CD14-positive monocyte (primary cell): ENCODE measurements at regions of chr11 and their contacts with region 1.

Region 1: GRCh38 chr11:62855571-62856332 is 16.4 kb upstream of the WDR74 start:
- DNase-seq: peak; percentile 97 to 99 (median 98)
- H3K4me3 ChIP-seq: peak overlapping the region; percentile 77 to 96 (median 94)
- H3K4me3 Mint-ChIP-seq: peak overlapping the region; percentile 91 to 98
- H3K27ac ChIP-seq: peak overlapping the region; percentile 11 to 81
- H3K27ac Mint-ChIP-seq: peak overlapping the region; percentile 88 to 94 (median 90)
- H3K4me1 ChIP-seq: peaks cover 34 to 45% of the 10 kb centered on the region in 2 donors
- H3K4me1 Mint-ChIP-seq: peaks cover 48% of the 10 kb centered on the region
- H3K27me3 ChIP-seq: no peaks in the 10 kb centered on the region
- H3K27me3 Mint-ChIP-seq: no peaks in the 10 kb centered on the region
- CTCF ChIP-seq: no peak

Region 2: GRCh38 chr11:61860054-61860903 is 995.5 kb before region 1 on chr11:
- intact Hi-C with region 1: no loop called
- DNase-seq: no peak
- H3K4me3 ChIP-seq: no peak overlapping the region
- H3K4me3 Mint-ChIP-seq: no peak overlapping the region
- H3K27ac ChIP-seq: no peak overlapping the region
- H3K27ac Mint-ChIP-seq: peak overlapping the region in 3 of 7 donors; percentile 17 to 66 (median 40)
- H3K4me1 ChIP-seq: no peaks in the 10 kb centered on the region
- H3K4me1 Mint-ChIP-seq: no peaks in the 10 kb centered on the region
- H3K27me3 ChIP-seq: no peaks in the 10 kb centered on the region
- H3K27me3 Mint-ChIP-seq: peaks cover 0 to 2% (median 0%) of the 10 kb centered on the region in 3 donors
- CTCF ChIP-seq: no peak

Region 3: GRCh38 chr11:62612366-62613290 is 243.1 kb before region 1 on chr11 and contains the starts of genes EML3 and ROM1:
- intact Hi-C with region 1: loop called in 1 of 2 experiments (anchors 10 kb)
- DNase-seq: peak; percentile 68 to 83 (median 76)
- H3K4me3 ChIP-seq: peak within 1 kb of the TSS; percentile 61 to 98 (median 68)
- H3K4me3 Mint-ChIP-seq: peak within 1 kb of the TSS; percentile 98 to 100
- H3K27ac ChIP-seq: peak within 1 kb of the TSS; percentile 67 to 86
- H3K27ac Mint-ChIP-seq: peak within 1 kb of the TSS; percentile 80 to 96 (median 92)
- H3K4me1 ChIP-seq: peaks cover 26 to 35% of the 10 kb centered on the region in 2 donors
- H3K4me1 Mint-ChIP-seq: peaks cover 31% of the 10 kb centered on the region
- H3K27me3 ChIP-seq: no peaks in the 10 kb centered on the region
- H3K27me3 Mint-ChIP-seq: peaks cover 0 to 2% (median 0%) of the 10 kb centered on the region in 3 donors
- CTCF ChIP-seq: peak; percentile 100
- polyA plus RNA-seq, gene EML3: 7.2 to 131 (median 10.6) TPM
- polyA plus RNA-seq, gene ROM1: 0.51 to 1.4 (median 0.75) TPM

Region 4: GRCh38 chr11:62805076-62805892 is 50.5 kb before region 1 on chr11 and contains the start of gene NXF1:
- intact Hi-C with region 1: no loop called
- DNase-seq: peak; percentile 96 to 97 (median 96)
- H3K4me3 ChIP-seq: peak within 1 kb of the TSS; percentile 75 to 97 (median 91)
- H3K4me3 Mint-ChIP-seq: peak within 1 kb of the TSS; percentile 97 to 98
- H3K27ac ChIP-seq: peak within 1 kb of the TSS; percentile 98
- H3K27ac Mint-ChIP-seq: peak within 1 kb of the TSS; percentile 95 to 99 (median 98)
- H3K4me1 ChIP-seq: peaks cover 44 to 48% of the 10 kb centered on the region in 2 donors
- H3K4me1 Mint-ChIP-seq: peaks cover 35% of the 10 kb centered on the region
- H3K27me3 ChIP-seq: no peaks in the 10 kb centered on the region
- H3K27me3 Mint-ChIP-seq: peaks cover 0 to 3% (median 2%) of the 10 kb centered on the region in 3 donors
- CTCF ChIP-seq: no peak
- polyA plus RNA-seq, gene NXF1: 50.1 to 748 (median 70.6) TPM

Region 5: DNA sequence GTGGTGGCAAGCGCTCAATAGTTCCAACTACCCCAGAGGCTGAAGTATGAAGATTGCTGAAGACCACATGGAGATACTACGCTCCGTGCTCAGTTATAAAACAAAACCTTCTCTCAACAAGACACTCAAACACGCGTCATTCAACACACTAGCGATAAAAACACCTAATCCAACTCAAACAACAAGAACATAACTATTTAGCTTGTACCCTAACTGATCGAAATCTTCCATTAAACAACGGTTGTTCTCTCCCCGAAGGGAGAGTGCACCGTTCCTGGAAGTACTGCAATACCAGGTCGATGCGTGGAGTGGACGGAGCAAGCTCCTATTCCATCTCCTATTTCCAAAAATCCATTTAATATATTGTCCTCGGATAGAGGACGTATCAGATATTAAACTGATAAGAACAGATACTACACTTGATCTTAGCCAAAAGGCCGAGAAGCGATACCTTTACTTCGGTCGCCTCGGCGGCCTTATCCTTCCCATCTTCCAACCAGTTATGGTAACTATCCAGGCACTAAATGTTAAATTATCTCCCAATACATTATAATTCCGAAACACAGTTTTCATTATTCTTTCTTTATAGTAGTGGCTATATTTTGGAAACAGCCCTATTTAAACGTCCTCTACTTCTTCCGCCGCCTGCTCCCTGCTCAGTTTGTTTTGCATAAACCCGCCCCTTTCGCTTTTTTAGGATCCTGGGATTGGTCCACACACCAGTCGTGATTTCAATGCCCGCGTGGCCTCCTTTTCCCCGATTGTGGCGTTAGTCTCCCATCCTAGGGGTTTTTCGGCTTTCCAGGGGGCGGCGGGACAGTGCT is 14.2 kb before region 1 on chr11:
- intact Hi-C with region 1: loop called (anchors 1 to 2 kb)
- DNase-seq: peak; percentile 92 to 97 (median 94)
- H3K4me3 ChIP-seq: peak overlapping the region; percentile 62 to 98 (median 93)
- H3K4me3 Mint-ChIP-seq: no peak overlapping the region
- H3K27ac ChIP-seq: peak overlapping the region; percentile 97 to 99
- H3K27ac Mint-ChIP-seq: no peak overlapping the region
- H3K4me1 ChIP-seq: peaks cover 29 to 36% of the 10 kb centered on the region in 2 donors
- H3K4me1 Mint-ChIP-seq: peaks cover 20% of the 10 kb centered on the region
- H3K27me3 ChIP-seq: no peaks in the 10 kb centered on the region
- H3K27me3 Mint-ChIP-seq: no peaks in the 10 kb centered on the region
- CTCF ChIP-seq: no peak

Region 6: GRCh38 chr11:62889484-62890437 is 34.0 kb after region 1 on chr11:
- intact Hi-C with region 1: no loop called
- DNase-seq: no peak
- H3K4me3 ChIP-seq: no peak overlapping the region
- H3K4me3 Mint-ChIP-seq: no peak overlapping the region
- H3K27ac ChIP-seq: peak overlapping the region; percentile 15 to 45
- H3K27ac Mint-ChIP-seq: peak overlapping the region; percentile 3 to 76 (median 48)
- H3K4me1 ChIP-seq: no peaks in the 10 kb centered on the region
- H3K4me1 Mint-ChIP-seq: peaks cover 5% of the 10 kb centered on the region
- H3K27me3 ChIP-seq: no peaks in the 10 kb centered on the region
- H3K27me3 Mint-ChIP-seq: peaks cover 0 to 5% (median 1%) of the 10 kb centered on the region in 3 donors
- CTCF ChIP-seq: no peak